Activated CD4-positive, alpha-beta T cell treated with anti-CD3 and anti-CD28 coated beads for 36 hours (primary cell): ENCODE measurements at regions of chr14 and their contacts with region 1.

Region 1: DNA sequence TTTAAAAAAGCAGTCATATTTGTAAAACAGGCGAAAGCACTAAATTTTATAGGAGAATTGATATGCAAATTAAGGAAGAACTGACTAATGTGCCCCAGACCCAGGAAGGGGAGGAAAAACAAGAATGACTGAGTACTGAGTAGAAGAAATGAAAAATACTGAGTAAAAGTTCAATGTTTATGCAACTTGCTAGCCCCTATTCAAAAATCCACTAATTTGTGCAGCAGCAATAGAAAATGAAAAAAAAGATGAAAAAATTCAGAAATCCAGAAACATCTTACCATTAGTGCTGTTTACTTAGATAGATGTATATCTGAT is 6.1 kb downstream of the CHD8 start:
- DNase-seq: no peak
- ATAC-seq: peak; percentile 51
- H3K4me3 Mint-ChIP-seq: peak overlapping the region; percentile 9
- H3K27ac Mint-ChIP-seq: peak overlapping the region; percentile 77
- H3K4me1 Mint-ChIP-seq: peaks cover 69% of the 10 kb centered on the region
- H3K27me3 Mint-ChIP-seq: no peaks in the 10 kb centered on the region

Region 2: DNA sequence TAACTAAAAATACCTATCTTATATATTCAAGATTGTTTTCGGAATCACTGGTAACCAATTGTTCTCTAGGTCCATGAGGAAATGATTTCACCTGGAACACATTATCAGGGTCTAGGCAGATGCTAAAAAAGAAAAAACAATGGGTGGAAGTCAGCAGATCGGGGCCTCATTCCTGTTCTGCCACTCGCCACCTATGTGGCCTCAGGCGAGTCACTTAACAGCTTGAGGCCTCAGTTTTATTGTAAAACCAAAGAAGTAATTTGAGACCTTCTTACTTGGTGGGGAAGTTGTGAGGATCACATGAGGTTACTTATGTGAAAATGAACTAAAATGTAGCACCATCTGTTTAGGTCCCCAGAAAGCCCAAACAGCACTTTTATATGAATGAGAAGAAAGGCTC is 950.8 kb before region 1 on chr14:
- CTCF ChIA-PET with region 1: no interaction called
- POLR2A ChIA-PET with region 1: no interaction called
- intact Hi-C with region 1: no loop called
- DNase-seq: peak; percentile 22
- ATAC-seq: peak; percentile 53
- H3K4me3 Mint-ChIP-seq: no peak overlapping the region
- H3K27ac Mint-ChIP-seq: no peak overlapping the region
- H3K4me1 Mint-ChIP-seq: peaks cover 30% of the 10 kb centered on the region
- H3K27me3 Mint-ChIP-seq: no peaks in the 10 kb centered on the region

Region 3: DNA sequence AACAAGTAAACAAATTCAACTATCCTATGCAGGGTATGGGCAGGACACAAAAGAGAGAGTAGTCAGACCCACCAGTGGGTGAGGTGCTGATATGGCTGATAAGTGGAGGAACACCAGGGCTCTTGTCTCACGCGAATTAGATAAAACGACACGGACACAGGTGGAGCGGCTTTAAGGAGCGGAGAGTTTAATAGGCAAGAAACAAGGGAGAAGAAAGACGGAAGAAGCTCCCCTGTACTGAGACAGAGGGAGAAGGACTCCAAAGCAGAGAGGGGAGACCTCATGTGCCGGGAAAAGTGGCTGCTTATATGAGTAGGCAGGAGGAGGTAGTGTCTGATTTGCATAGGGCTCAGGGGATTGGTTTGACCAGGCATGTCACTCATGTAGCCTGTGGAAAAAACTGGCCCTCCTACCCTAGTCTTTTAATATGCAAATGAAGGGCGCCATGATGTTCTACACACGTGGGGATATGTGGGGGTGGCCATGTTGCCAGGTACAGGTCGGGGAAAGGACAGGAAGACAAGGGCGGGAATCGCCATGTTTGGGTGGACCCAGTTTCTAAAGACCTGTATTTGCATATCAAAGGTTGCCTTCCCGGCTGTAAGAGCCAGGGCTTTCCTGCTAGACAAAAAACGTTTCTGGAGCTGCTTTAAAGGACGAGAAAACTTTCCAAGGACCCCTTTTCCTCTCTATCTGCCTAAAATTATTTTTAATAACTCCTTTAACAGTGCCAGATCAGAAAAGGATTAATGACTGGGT is 141.2 kb before region 1 on chr14:
- CTCF ChIA-PET with region 1: no interaction called
- POLR2A ChIA-PET with region 1: no interaction called
- intact Hi-C with region 1: loop called in 1 of 2 experiments (anchors 2 kb)
- DNase-seq: peak; percentile 88
- ATAC-seq: peak; percentile 93
- H3K4me3 Mint-ChIP-seq: peak overlapping the region; percentile 73
- H3K27ac Mint-ChIP-seq: peak overlapping the region; percentile 92
- H3K4me1 Mint-ChIP-seq: peaks cover 22% of the 10 kb centered on the region
- H3K27me3 Mint-ChIP-seq: no peaks in the 10 kb centered on the region

Region 4: GRCh38 chr14:21414137-21414631 is 35.7 kb before region 1 on chr14:
- CTCF ChIA-PET with region 1: no interaction called
- POLR2A ChIA-PET with region 1: interaction called, 4 read pairs
- intact Hi-C with region 1: loop called (anchors 1 kb)
- DNase-seq: no peak
- ATAC-seq: peak; percentile 91
- H3K4me3 Mint-ChIP-seq: no peak overlapping the region
- H3K27ac Mint-ChIP-seq: peak overlapping the region; percentile 88
- H3K4me1 Mint-ChIP-seq: peaks cover 26% of the 10 kb centered on the region
- H3K27me3 Mint-ChIP-seq: no peaks in the 10 kb centered on the region

Region 5: DNA sequence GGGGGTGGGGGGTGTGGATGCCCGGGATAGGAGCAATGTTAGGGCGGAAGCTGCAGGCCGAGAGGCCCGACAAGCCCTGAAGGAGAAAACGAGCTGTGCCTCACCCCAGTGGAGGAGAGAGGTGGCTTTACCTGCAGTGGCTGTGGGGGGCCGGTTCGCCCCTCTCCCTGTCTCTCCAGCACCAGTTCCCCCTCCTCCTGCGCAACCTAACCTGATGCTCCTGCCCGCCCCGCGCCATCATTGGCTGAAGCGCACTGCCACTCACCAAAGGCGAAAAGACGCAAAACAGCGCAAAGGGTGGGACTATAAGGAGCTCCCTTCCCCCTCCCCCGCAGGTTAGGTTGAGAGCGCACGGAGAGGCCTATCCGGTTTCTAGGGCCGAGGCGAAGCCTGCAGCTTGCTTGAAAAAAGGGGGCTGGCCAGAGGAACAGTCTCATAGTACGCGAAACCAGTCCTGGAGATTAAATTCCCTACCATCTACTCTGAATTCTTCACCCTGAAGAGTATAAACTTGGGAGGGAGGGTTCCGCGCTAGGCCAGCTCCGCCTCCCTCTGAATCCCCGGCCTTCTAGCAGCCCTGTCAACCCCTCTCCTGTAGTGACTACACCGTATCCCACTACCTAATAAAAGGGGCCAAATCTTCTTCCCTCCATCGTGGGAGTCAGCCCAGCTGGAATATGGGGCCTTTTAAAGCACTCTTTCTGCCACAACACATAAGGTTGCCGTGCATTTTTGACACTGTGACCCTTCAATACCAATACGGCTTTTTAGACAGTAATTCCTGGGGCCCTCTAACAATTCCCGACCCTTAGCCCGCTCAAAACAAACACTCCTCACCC is 12.6 kb before region 1 on chr14:
- CTCF ChIA-PET with region 1: interaction called, 40 read pairs
- POLR2A ChIA-PET with region 1: interaction called, 33 read pairs
- intact Hi-C with region 1: no loop called
- DNase-seq: peak; percentile 99
- ATAC-seq: peak; percentile 99
- H3K4me3 Mint-ChIP-seq: peak overlapping the region; percentile 95
- H3K27ac Mint-ChIP-seq: peak overlapping the region; percentile 87
- H3K4me1 Mint-ChIP-seq: peaks cover 57% of the 10 kb centered on the region
- H3K27me3 Mint-ChIP-seq: no peaks in the 10 kb centered on the region

Region 6: DNA sequence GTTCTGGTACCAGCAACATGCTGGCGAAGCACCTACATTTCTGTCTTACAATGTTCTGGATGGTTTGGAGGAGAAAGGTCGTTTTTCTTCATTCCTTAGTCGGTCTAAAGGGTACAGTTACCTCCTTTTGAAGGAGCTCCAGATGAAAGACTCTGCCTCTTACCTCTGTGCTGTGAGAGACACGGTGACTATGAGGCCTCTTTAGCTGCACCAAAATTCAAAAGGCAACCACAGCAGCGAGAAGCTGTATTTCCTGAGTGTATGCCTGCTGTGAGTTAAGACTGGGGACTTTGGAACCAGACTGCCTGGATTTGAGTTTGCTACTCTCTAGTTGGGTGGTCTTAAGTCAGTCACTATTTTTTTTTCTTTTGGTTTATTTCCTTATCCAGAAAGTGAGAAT is 193.5 kb after region 1 on chr14:
- CTCF ChIA-PET with region 1: no interaction called
- POLR2A ChIA-PET with region 1: no interaction called
- intact Hi-C with region 1: no loop called
- DNase-seq: no peak
- ATAC-seq: no peak
- H3K4me3 Mint-ChIP-seq: peak overlapping the region; percentile 48
- H3K27ac Mint-ChIP-seq: no peak overlapping the region
- H3K4me1 Mint-ChIP-seq: peaks cover 2% of the 10 kb centered on the region
- H3K27me3 Mint-ChIP-seq: peaks cover 4% of the 10 kb centered on the region